A673 (cell line): ENCODE measurements at regions of chr2 and their contacts with region 1.

Region 1: GRCh38 chr2:139031722-139032121 is 251.5 kb upstream of the NXPH2 start:
- DNase-seq: peak; percentile 64
- H3K4me3 ChIP-seq: no peak overlapping the region
- H3K27ac ChIP-seq: no peak overlapping the region
- H3K4me1 ChIP-seq: no peaks in the 10 kb centered on the region
- H3K27me3 ChIP-seq: no peaks in the 10 kb centered on the region
- CTCF ChIP-seq: peak; percentile 55

Region 2: GRCh38 chr2:138846223-138846821 is 185.4 kb before region 1 on chr2:
- CTCF ChIA-PET with region 1: interaction called, 3 read pairs
- POLR2A ChIA-PET with region 1: no interaction called
- intact Hi-C with region 1: loop called (anchors 5 kb)
- DNase-seq: peak; percentile 77
- H3K4me3 ChIP-seq: no peak overlapping the region
- H3K27ac ChIP-seq: no peak overlapping the region
- H3K4me1 ChIP-seq: no peaks in the 10 kb centered on the region
- H3K27me3 ChIP-seq: no peaks in the 10 kb centered on the region
- CTCF ChIP-seq: peak; percentile 88

Region 3: GRCh38 chr2:138928374-138929021 is 103.2 kb before region 1 on chr2:
- CTCF ChIA-PET with region 1: interaction called, 3 read pairs
- POLR2A ChIA-PET with region 1: no interaction called
- intact Hi-C with region 1: loop called (anchors 2 kb)
- DNase-seq: peak; percentile 67
- H3K4me3 ChIP-seq: no peak overlapping the region
- H3K27ac ChIP-seq: peak overlapping the region; percentile 18
- H3K4me1 ChIP-seq: peaks cover 31% of the 10 kb centered on the region
- H3K27me3 ChIP-seq: no peaks in the 10 kb centered on the region
- CTCF ChIP-seq: no peak

Region 4: GRCh38 chr2:139293992-139294548 is 262.3 kb after region 1 on chr2:
- CTCF ChIA-PET with region 1: no interaction called
- POLR2A ChIA-PET with region 1: no interaction called
- intact Hi-C with region 1: no loop called
- DNase-seq: no peak
- H3K4me3 ChIP-seq: no peak overlapping the region
- H3K27ac ChIP-seq: no peak overlapping the region
- H3K4me1 ChIP-seq: no peaks in the 10 kb centered on the region
- H3K27me3 ChIP-seq: no peaks in the 10 kb centered on the region
- CTCF ChIP-seq: no peak